Activated T-helper 2 cell treated with anti-CD3 and anti-CD28 coated beads, Interferon-gamma antibody, Interleukin-2, Interleukin-4, amounts not matched to agents 10 μg/mL and 5 μg/mL and 100 μg/mL, durations not matched to agents 14 hours and 24 hours and 36 hours (primary cell): ENCODE measurements at regions of chr11 and their contacts with region 1.

Region 1: DNA sequence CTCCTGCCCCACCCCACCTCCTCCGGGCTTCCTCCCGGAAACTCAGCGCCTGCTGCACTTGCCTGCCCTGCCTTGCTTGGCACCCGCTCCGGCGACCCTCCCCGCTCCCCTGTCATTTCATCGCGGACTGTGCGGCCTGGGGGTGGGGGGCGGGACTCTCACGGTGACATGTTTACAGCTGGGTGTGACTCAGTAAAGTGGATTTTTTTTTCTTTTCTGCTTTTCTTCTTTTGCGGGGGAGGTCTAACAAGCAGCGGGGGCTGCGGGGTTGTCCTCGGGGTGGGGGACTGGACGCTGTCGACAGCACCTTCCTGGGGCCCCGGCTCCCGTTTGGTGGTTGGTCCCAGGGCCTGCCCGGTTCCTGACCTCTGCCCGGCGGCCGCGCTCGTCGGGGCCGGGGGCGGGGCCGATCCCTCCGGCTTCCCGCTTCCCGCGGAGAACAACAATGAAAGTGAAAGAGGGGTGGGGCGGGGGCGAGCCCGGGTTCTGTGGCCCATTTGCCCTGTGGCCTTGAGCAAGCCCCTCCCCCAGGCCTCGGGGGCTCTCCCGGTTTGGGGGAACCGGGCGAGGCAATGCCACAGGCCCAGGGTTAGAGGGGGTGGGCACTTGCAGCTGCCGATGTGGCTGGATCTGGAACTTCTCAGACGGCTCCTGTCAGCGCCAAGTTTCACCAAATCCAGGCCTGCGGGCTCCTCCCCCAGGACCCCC is 975 bp upstream of the MDK start:
- DNase-seq: peak; percentile 55
- H3K4me3 Mint-ChIP-seq: peak overlapping the region; percentile 47
- H3K27ac Mint-ChIP-seq: peak overlapping the region; percentile 17
- H3K4me1 Mint-ChIP-seq: peaks cover 5% of the 10 kb centered on the region
- H3K27me3 Mint-ChIP-seq: peaks cover 21% of the 10 kb centered on the region

Region 2: GRCh38 chr11:46352063-46352841 is 28.2 kb before region 1 on chr11:
- intact Hi-C with region 1: loop called (anchors 2 kb)
- DNase-seq: peak; percentile 63
- H3K4me3 Mint-ChIP-seq: peak overlapping the region; percentile 73
- H3K27ac Mint-ChIP-seq: peak overlapping the region; percentile 72
- H3K4me1 Mint-ChIP-seq: peaks cover 47% of the 10 kb centered on the region
- H3K27me3 Mint-ChIP-seq: no peaks in the 10 kb centered on the region